ENCODE measurements at regions of chr18 and their contacts with region 1.

Region 1: GRCh38 chr18:53698907-53699306 is 525.6 kb downstream of the MBD2 start:
- DNase-seq: peak; percentile 46
- H3K4me3 ChIP-seq: no peak overlapping the region
- H3K27ac ChIP-seq: no peak overlapping the region
- H3K4me1 ChIP-seq: no peaks in the 10 kb centered on the region
- H3K27me3 ChIP-seq: no peaks in the 10 kb centered on the region
- CTCF ChIP-seq: peak; percentile 60

Region 2: GRCh38 chr18:52992041-52992440 is 706.9 kb before region 1 on chr18:
- intact Hi-C with region 1: no loop called
- DNase-seq: no peak
- H3K4me3 ChIP-seq: no peak overlapping the region
- H3K27ac ChIP-seq: no peak overlapping the region
- H3K4me1 ChIP-seq: no peaks in the 10 kb centered on the region
- H3K27me3 ChIP-seq: no peaks in the 10 kb centered on the region
- CTCF ChIP-seq: peak; percentile 15

Region 3: DNA sequence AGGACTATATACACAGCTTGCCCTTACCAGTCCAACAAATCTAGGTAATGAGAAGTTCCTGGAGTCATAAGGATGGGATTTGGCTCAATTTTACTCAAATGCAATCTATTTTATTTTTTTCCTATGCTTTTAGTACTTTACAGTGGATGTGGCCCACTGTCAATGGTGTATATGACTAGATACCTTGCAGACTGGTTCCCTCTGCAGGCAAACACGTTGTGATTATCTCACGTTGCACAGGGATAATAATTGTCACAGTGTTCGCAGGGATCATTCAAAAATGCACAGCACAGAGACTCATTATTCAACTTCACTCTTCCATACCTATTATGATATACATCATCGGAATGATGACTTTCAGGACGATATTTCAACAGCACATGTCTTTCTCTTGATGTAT is 165.9 kb after region 1 on chr18:
- intact Hi-C with region 1: loop called (anchors 5 kb)
- DNase-seq: no peak
- H3K4me3 ChIP-seq: no peak overlapping the region
- H3K27ac ChIP-seq: no peak overlapping the region
- H3K4me1 ChIP-seq: no peaks in the 10 kb centered on the region
- H3K27me3 ChIP-seq: no peaks in the 10 kb centered on the region
- CTCF ChIP-seq: no peak

Region 4: GRCh38 chr18:54117853-54118773 is 419.2 kb after region 1 on chr18:
- intact Hi-C with region 1: loop called (anchors 2 kb)
- DNase-seq: no peak
- H3K4me3 ChIP-seq: no peak overlapping the region
- H3K27ac ChIP-seq: no peak overlapping the region
- H3K4me1 ChIP-seq: no peaks in the 10 kb centered on the region
- H3K27me3 ChIP-seq: no peaks in the 10 kb centered on the region
- CTCF ChIP-seq: no peak